ENCODE measurements at regions of chr17 and their contacts with region 1.

Region 1: GRCh38 chr17:65055348-65056261 is 935 bp downstream of the GNA13 start:
- DNase-seq: peak; percentile 37 to 63 (median 43)
- H3K4me3 ChIP-seq: peak overlapping the region; percentile 91 to 94
- H3K4me3 Mint-ChIP-seq: peak overlapping the region; percentile 91 to 100 (median 98)
- H3K27ac ChIP-seq: peak overlapping the region; percentile 96
- H3K27ac Mint-ChIP-seq: peak overlapping the region; percentile 96 to 99 (median 98)
- H3K4me1 ChIP-seq: peaks cover 48% of the 10 kb centered on the region
- H3K4me1 Mint-ChIP-seq: peaks cover 32 to 65% (median 47%) of the 10 kb centered on the region in 4 donors
- H3K27me3 ChIP-seq: no peaks in the 10 kb centered on the region
- H3K27me3 Mint-ChIP-seq: no peaks in the 10 kb centered on the region

Region 2: DNA sequence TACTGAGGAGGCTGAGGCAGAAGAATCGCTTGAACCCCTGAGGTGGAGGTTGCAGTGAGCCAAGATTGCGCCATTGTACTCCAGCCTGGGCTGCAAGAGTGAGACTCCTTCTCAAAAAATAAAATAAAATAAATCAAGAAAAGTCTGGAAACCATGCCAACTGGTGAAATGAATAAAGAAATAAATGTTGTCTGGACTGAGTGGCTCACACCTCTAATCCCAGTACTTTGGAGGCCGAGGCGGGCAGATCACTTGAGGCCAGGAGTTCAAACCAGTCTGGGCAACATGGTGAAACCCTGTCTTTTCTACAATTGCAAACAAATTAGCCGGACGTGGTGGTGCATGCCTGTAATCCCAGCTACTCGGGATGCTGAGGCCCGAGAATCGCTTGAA is 135.6 kb before region 1 on chr17:
- CTCF ChIA-PET with region 1: interaction called, 3 read pairs
- POLR2A ChIA-PET with region 1: interaction called, 17 read pairs
- intact Hi-C with region 1: no loop called
- DNase-seq: peak in 1 of 5 donors; percentile 45
- H3K4me3 ChIP-seq: peak overlapping the region; percentile 47 to 61
- H3K4me3 Mint-ChIP-seq: peak overlapping the region; percentile 86 to 97 (median 88)
- H3K27ac ChIP-seq: peak overlapping the region; percentile 71
- H3K27ac Mint-ChIP-seq: peak overlapping the region; percentile 91 to 97 (median 95)
- H3K4me1 ChIP-seq: peaks cover 6% of the 10 kb centered on the region
- H3K4me1 Mint-ChIP-seq: peaks cover 2 to 18% (median 11%) of the 10 kb centered on the region in 4 donors
- H3K27me3 ChIP-seq: no peaks in the 10 kb centered on the region
- H3K27me3 Mint-ChIP-seq: no peaks in the 10 kb centered on the region

Region 3: DNA sequence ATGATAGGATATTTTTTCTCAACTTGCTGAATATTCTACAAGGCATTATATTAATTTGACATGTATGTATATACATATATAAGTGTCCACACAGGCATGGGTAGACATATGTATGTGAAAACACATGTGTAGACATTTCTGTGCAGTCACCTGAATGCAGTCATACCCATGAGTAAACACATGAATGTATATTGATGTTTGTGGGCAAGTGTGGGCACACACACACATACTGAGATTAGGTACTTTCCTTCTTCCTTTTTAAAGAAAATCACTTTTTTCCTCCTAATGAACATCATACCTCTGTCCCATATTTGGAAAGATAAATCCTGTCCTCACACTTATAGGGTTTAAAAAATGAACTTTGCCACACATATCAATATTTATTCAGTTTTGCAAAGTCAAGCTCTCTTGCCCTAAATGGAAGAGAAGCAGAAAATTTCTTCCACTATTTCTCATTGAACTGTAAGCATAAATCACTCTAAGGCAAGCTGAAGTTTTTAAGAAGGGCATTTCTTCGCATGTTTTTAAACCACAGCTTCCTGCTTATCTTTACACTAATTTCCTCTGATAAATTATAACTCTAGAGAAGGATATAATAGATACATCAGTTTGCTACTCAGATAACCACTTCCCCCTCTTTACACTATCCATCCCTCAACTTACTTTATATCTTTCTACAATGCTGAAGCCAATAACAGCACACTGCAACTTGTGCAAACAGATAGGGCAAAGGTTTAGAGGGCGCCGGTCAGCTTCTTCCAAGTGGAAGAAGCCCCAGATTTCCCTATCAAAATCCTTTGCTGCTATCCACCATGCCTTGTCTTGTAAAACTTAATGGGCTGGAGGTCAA is 86.7 kb before region 1 on chr17:
- CTCF ChIA-PET with region 1: interaction called, 3 read pairs
- POLR2A ChIA-PET with region 1: interaction called, 68 read pairs
- intact Hi-C with region 1: no loop called
- DNase-seq: peak; percentile 45 to 71 (median 47)
- H3K4me3 ChIP-seq: no peak overlapping the region
- H3K4me3 Mint-ChIP-seq: peak overlapping the region; percentile 69 to 92 (median 80)
- H3K27ac ChIP-seq: peak overlapping the region; percentile 62
- H3K27ac Mint-ChIP-seq: peak overlapping the region; percentile 92 to 99 (median 97)
- H3K4me1 ChIP-seq: peaks cover 77% of the 10 kb centered on the region
- H3K4me1 Mint-ChIP-seq: peaks cover 35 to 79% (median 59%) of the 10 kb centered on the region in 4 donors
- H3K27me3 ChIP-seq: no peaks in the 10 kb centered on the region
- H3K27me3 Mint-ChIP-seq: no peaks in the 10 kb centered on the region

Region 4: DNA sequence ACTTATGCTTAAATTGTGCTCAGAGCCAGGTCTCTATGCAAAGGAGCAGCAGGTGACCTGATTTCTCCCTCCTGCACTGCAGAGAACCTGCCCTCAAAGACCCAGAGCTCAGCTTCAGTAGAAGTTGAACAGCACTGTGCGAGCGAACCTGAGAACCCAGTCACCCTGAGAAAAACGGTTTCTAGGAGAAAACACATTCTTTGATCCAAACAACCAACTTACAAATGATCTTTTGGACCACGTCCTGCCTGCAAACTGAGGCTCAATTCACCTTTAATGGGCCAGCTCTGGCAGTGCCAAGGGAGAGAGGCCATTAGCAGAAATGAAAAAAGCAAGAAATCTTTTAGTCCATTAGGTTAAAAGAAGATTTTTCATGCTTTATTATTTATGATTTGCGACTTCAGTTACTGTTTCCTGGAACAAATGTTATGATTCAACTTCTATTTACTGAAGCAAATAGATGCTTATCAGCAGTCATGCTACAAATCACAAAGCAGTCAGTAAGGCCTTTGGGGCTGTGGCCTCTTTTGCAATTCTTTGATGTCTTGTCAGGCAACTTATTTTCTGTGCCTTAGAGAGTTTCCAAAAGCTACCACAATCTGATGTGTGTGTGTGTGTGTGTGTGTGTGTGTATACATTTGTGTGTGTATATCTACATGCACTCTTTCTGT is 70.6 kb before region 1 on chr17:
- CTCF ChIA-PET with region 1: interaction called, 5 read pairs
- POLR2A ChIA-PET with region 1: interaction called, 70 read pairs
- intact Hi-C with region 1: loop called (anchors 1 kb)
- DNase-seq: peak; percentile 74 to 94 (median 84)
- H3K4me3 ChIP-seq: peak overlapping the region; percentile 19 to 30
- H3K4me3 Mint-ChIP-seq: peak overlapping the region; percentile 71 to 87 (median 82)
- H3K27ac ChIP-seq: peak overlapping the region; percentile 92
- H3K27ac Mint-ChIP-seq: peak overlapping the region; percentile 98 to 100 (median 99)
- H3K4me1 ChIP-seq: peaks cover 54% of the 10 kb centered on the region
- H3K4me1 Mint-ChIP-seq: peaks cover 32 to 54% (median 45%) of the 10 kb centered on the region in 4 donors
- H3K27me3 ChIP-seq: no peaks in the 10 kb centered on the region
- H3K27me3 Mint-ChIP-seq: no peaks in the 10 kb centered on the region

Region 5: DNA sequence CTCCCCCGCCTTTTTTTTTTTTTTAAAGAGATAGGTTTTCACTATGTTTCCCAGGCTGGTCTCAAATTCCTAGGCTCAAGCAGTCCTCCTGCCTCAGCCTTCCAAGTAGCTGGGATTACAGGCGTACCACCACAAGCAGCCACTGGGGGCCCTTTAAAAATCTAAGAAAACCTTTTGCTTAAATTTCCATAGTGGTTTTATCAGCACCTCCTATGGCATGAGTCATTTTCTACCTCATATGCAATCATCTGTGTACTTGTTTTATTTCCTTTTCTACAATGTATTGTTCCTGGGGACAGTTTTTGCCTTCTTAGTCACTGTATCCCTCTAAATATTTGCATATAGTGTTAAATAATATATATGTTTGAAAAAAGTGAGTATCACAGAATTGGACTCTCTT is 28.3 kb before region 1 on chr17:
- CTCF ChIA-PET with region 1: interaction called, 3 read pairs
- POLR2A ChIA-PET with region 1: interaction called, 18 read pairs
- intact Hi-C with region 1: loop called (anchors 1 kb)
- DNase-seq: peak; percentile 55 to 79 (median 58)
- H3K4me3 ChIP-seq: no peak overlapping the region
- H3K4me3 Mint-ChIP-seq: peak overlapping the region; percentile 75 to 90 (median 87)
- H3K27ac ChIP-seq: peak overlapping the region; percentile 49
- H3K27ac Mint-ChIP-seq: peak overlapping the region; percentile 90 to 98 (median 96)
- H3K4me1 ChIP-seq: peaks cover 99% of the 10 kb centered on the region
- H3K4me1 Mint-ChIP-seq: peaks cover 61 to 94% (median 78%) of the 10 kb centered on the region in 4 donors
- H3K27me3 ChIP-seq: no peaks in the 10 kb centered on the region
- H3K27me3 Mint-ChIP-seq: no peaks in the 10 kb centered on the region

Region 6: DNA sequence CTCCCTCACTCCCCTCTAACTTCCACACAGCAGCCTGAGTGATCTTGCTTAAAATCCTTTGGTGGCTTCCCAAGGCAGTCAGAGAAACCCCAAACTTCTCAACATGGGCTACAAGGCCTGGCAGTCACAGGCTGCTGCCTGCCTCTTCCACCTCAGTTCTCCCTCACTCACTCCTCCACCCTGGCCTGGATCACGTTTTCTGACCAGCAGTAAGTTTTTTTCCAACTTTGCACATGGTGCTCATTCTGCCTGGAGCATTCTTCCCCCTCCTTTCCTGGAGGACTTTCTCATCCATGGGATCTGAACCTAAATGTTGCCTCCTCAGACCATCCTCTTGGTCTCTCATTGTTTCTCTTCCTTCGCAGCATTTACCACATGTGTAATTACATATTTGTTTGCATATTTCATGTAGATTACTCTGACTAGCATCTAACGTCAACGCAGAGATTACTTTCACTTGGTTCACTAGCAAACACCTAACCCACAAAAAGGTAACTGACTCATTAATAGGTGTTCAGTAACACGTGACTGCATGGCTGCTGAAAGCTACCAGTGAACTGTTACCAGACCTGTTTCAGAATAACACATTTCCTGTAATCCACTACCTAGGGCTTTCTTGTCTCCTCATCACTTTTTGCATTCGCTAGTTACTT is 16.1 kb before region 1 on chr17:
- CTCF ChIA-PET with region 1: interaction called, 4 read pairs
- POLR2A ChIA-PET with region 1: interaction called, 19 read pairs
- intact Hi-C with region 1: loop called (anchors 1 kb)
- DNase-seq: peak; percentile 78 to 89 (median 85)
- H3K4me3 ChIP-seq: peak overlapping the region; percentile 29 to 57
- H3K4me3 Mint-ChIP-seq: peak overlapping the region; percentile 74 to 92 (median 78)
- H3K27ac ChIP-seq: peak overlapping the region; percentile 87
- H3K27ac Mint-ChIP-seq: peak overlapping the region; percentile 82 to 99 (median 97)
- H3K4me1 ChIP-seq: peaks cover 98% of the 10 kb centered on the region
- H3K4me1 Mint-ChIP-seq: peaks cover 66 to 91% (median 77%) of the 10 kb centered on the region in 4 donors
- H3K27me3 ChIP-seq: no peaks in the 10 kb centered on the region
- H3K27me3 Mint-ChIP-seq: no peaks in the 10 kb centered on the region

Measured in CD4-positive, alpha-beta memory T cell (primary cell).